Head of caudate nucleus (tissue), 42 donors: ENCODE measurements at regions of chr6 and their contacts with region 1.

Region 1: GRCh38 chr6:144215932-144216667 is 65.8 kb downstream of the STX11 start:
- DNase-seq: peak; percentile 85 to 98 (median 93)

Region 2: DNA sequence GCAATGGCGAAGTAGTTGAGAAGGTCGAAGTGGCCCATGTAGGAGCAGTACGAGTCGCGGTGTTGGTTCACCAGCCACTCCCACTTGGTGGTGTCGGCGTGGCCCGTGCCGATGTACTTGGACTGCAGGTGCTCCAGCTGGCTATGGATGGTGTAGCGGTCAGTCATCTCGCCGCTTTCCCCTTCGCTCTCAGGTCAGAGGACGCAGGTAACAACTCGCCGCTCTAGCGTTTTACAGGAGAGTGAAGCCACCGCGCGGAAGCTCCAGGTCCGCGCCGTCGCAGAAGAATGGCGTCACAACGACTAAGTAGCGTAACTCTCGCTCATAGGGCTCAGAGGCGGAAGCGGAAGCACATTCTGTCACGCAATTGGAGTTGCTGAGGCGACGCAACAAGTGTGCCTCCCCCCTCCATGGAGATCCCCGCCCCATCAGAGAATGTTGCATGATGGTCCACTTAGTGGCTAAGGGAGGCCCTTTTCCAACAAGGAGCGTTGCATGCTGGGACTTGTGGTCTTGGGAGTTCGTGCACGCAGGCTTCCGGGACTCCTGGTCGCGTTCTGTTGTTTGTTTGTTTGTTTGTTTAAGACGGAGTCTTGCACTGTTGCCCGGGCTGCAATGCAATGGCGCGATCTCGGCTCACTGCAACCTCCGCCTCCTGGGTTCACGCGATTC is 120.6 kb before region 1 on chr6 and contains the start of gene SF3B5:
- intact Hi-C with region 1: loop called (anchors 5 kb)
- DNase-seq: peak; percentile 96 to 100 (median 98)